Right cardiac atrium (tissue), 5 donors: ENCODE measurements at regions of chr4 and their contacts with region 1.

Region 1: GRCh38 chr4:101347557-101348366 is 436 bp upstream of the PPP3CA start:
- DNase-seq: peak; percentile 99 to 100 (median 99)
- ATAC-seq: peak; percentile 96 to 97
- H3K4me3 ChIP-seq: peak overlapping the region; percentile 100
- H3K27ac ChIP-seq: peak overlapping the region; percentile 97
- H3K4me1 ChIP-seq: peaks cover 3% of the 10 kb centered on the region
- H3K27me3 ChIP-seq: no peaks in the 10 kb centered on the region

Region 2: DNA sequence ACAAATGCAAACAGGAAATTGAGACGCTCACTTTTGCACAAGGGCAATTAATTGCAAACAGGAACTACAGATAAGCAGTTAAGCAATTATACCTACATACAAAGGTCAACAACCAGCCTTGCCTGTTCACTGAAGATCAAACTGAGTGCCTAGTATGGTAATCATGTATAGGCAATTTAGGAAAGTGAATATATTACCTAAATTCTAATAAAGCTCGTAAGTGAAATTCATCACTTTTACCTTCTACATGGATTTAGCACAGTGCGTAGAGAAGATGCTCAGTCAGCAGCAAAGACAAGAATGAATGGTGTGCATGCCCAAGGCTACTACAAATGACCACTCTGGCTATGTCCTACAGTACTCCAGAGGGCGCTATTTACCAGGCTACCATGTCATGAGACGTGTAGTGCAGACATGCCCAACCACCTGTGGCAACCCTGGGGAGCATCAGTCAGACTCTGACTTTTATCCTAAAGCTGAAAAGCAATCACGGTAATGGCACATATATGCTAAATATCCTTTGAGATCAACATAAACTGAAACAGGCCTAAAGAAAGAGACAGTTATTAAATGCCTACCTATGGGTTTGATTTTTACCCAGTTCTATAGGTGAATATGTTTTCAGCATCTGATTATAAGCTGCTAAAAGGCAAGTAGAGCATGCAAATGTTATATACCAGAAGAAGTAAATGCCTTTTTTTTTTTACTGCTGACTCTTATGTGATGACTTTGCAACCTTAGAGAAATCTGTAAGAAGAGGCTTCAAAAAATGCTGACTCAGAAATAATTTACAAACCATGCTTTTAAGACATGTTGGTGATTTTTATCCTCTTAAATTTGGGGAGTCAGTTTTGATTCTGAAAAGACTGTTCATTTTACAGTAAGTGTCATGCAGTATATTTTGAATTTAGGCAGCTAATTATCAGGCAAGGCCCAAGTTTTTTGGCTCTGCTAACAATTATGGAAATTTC is 178.4 kb before region 1 on chr4:
- intact Hi-C with region 1: loop called in 1 of 4 experiments (anchors 10 kb)
- DNase-seq: peak in 2 of 3 donors; percentile 28 to 60
- ATAC-seq: peak; percentile 94
- H3K4me3 ChIP-seq: no peak overlapping the region
- H3K27ac ChIP-seq: no peak overlapping the region
- H3K4me1 ChIP-seq: no peaks in the 10 kb centered on the region
- H3K27me3 ChIP-seq: no peaks in the 10 kb centered on the region

Region 3: GRCh38 chr4:101191302-101192098 is 156.3 kb before region 1 on chr4:
- intact Hi-C with region 1: loop called in 2 of 4 experiments (anchors 5 to 10 kb)
- DNase-seq: peak; percentile 86 to 92 (median 89)
- ATAC-seq: peak; percentile 99
- H3K4me3 ChIP-seq: no peak overlapping the region
- H3K27ac ChIP-seq: peak overlapping the region; percentile 31
- H3K4me1 ChIP-seq: peaks cover 3% of the 10 kb centered on the region
- H3K27me3 ChIP-seq: no peaks in the 10 kb centered on the region

Region 4: GRCh38 chr4:101282076-101282844 is 65.5 kb before region 1 on chr4:
- intact Hi-C with region 1: loop called in 1 of 4 experiments (anchors 10 kb)
- DNase-seq: peak in 1 of 3 donors; percentile 40
- ATAC-seq: no peak
- H3K4me3 ChIP-seq: no peak overlapping the region
- H3K27ac ChIP-seq: no peak overlapping the region
- H3K4me1 ChIP-seq: peaks cover 12% of the 10 kb centered on the region
- H3K27me3 ChIP-seq: no peaks in the 10 kb centered on the region

Region 5: DNA sequence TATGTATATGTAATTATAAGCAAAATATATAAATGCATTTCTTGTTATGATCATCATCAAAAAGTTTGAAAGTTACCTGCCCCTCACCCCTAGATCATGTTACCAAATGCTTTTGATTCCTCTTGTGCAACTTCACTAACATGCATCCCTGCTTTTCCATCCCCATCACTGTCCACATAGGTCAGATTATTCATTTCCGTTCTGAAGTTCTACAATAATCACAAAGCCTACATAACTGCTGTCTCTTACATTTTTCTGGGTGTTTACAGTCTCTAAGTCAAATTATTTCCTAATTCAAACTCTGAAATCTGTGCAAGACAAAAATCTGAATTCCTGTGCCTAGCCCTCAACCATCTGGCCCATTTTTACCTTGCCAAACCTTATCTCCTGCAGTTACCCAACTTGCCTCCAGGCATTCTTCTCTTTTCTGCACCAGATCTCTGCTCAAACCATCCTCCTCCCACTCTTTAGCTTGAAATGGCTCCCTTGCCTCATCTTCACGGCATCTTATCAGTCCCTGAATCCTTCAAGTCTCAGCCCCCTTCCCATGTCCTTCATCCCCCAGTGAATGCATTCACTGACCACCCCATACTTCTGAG is 1039.9 kb after region 1 on chr4:
- intact Hi-C with region 1: no loop called
- DNase-seq: no peak
- ATAC-seq: no peak
- H3K4me3 ChIP-seq: no peak overlapping the region
- H3K27ac ChIP-seq: no peak overlapping the region
- H3K4me1 ChIP-seq: no peaks in the 10 kb centered on the region
- H3K27me3 ChIP-seq: no peaks in the 10 kb centered on the region